Cardiac septum (tissue), 1 donor: ENCODE measurements at regions of chr1 and their contacts with region 1.

Region 1: GRCh38 chr1:75265792-75266191 is 131.6 kb downstream of the LHX8 start:
- DNase-seq: no peak

Region 2: GRCh38 chr1:75310067-75310466 is 44.3 kb after region 1 on chr1:
- intact Hi-C with region 1: no loop called
- DNase-seq: no peak

Region 3: DNA sequence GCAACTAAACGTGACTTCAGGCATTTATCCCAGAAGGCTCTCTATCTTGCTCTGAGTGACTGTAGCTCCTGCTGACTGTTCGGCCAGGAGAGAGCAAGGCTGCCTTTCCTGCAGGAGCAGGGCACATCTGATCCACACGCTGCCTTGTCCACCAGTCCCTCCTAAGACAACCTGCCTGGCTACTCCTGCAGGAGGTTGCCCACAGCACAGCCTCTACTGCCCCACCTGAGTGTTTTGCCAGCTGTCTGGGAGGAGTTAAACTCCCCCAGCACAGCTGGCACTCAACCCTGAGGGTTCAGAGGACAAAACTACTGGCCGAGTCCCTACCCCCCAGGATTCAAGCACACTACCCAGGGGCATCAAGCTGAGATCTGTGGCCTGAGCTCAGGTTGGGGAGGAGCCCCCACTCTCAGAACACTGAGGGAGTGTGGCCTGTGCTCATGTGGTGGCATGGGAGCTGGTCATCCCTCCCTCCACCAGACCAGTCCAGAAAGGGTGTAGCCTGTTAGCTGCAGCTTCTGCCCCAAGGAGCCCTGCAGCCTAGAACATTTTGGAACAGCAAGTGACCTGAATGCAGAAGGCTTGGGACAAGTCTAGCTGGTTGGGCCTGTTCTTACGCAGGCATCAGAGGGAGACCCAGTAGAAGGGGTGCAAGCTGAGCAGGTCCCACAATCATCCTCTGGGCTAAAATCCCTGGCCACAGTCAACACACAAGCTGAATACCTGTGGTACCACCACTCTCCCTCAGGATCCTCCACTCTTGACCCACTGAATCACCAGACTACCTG is 107.9 kb after region 1 on chr1:
- intact Hi-C with region 1: no loop called
- DNase-seq: no peak

Region 4: GRCh38 chr1:75632350-75632949 is 366.7 kb after region 1 on chr1:
- intact Hi-C with region 1: loop called (anchors 1 kb)
- DNase-seq: no peak